ENCODE measurements at regions of chr22 and their contacts with region 1.

Region 1: GRCh38 chr22:37502342-37503182 is 16.4 kb upstream of the MFNG start:
- DNase-seq: no peak
- H3K4me3 Mint-ChIP-seq: no peak overlapping the region
- H3K27ac Mint-ChIP-seq: no peak overlapping the region
- H3K4me1 Mint-ChIP-seq: peaks cover 7% of the 10 kb centered on the region
- H3K27me3 Mint-ChIP-seq: no peaks in the 10 kb centered on the region

Region 2: DNA sequence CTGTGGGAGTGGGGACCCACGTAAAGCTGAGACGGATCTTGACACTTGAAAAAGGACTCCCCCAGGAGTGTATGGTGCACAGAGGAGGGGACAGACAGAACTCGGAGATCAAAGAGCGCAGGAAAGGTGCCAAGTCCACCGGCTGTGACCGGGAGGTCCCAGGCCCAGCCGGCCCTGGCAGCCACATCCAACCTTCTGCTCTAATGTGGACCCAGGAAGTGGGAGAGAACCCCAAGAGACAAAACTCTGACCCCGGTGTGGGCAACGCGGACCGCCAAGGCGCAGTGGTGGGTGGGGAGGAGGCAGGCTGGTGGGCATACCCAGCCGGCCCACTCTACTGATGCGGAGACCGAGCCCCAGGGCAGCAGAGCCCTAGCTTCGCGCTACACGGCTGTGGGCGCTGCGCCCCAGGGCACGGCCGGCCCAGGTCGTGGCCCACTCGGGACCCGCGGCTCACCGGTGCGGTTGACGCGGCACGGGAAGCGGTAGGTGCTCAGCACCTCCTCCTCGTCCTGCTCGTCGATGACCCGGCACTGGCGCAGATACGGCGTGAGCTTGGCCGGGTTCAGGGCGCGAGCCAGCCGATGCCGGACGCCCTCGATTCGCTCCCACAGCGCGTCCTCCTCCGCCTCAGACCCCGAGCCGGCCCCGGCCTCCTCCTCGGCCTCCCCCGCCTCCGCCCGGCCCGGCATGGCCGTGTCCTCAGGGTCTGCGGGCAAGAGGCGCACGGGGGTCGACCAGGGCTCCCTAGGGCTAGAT is 16.1 kb after region 1 on chr22:
- intact Hi-C with region 1: loop called (anchors 1 kb)
- DNase-seq: no peak
- H3K4me3 Mint-ChIP-seq: peak overlapping the region; percentile 53
- H3K27ac Mint-ChIP-seq: no peak overlapping the region
- H3K4me1 Mint-ChIP-seq: peaks cover 4% of the 10 kb centered on the region
- H3K27me3 Mint-ChIP-seq: peaks cover 58% of the 10 kb centered on the region